ENCODE measurements at regions of chr19 and their contacts with region 1.

Region 1: GRCh38 chr19:14517840-14518505 is at the start of gene DNAJB1:
- DNase-seq: peak; percentile 81
- ATAC-seq: peak; percentile 56
- H3K4me3 Mint-ChIP-seq: peak within 1 kb of the TSS; percentile 94
- H3K27ac Mint-ChIP-seq: peak within 1 kb of the TSS; percentile 94
- H3K4me1 Mint-ChIP-seq: peaks cover 60% of the 10 kb centered on the region
- H3K27me3 Mint-ChIP-seq: no peaks in the 10 kb centered on the region
- total RNA-seq, gene DNAJB1: 69.3 to 72.6 TPM

Region 2: DNA sequence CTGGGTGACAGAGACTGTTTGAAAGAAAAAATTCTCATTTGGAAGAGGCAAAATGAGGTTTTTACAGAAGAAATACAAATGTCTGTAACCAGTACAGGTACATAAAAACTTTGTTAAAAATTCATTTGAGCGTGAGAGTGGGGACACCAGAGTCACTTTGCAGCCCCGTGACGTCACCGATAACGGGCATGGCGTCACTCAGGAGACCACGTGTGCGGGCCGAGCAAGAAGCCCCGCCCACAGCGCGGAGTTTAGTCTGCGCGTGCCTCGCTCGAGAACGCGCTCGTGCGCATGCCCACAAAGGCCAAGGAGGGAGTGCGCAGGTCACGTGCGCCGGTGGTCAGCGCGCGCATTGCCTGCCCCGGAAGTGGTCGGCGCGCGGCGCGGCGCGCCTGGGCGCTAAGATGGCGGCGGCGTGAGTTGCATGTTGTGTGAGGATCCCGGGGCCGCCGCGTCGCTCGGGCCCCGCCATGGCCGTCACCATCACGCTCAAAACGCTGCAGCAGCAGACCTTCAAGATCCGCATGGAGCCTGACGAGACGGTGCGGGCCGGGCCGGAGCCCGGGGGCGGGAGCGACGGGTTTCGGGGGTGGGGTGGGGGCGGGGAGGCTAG is 1572.4 kb before region 1 on chr19 and contains the start of gene RAD23A:
- CTCF ChIA-PET with region 1: no interaction called
- POLR2A ChIA-PET with region 1: no interaction called
- intact Hi-C with region 1: loop called in 1 of 2 experiments (anchors 10 kb)
- DNase-seq: peak; percentile 100
- ATAC-seq: peak; percentile 81
- H3K4me3 Mint-ChIP-seq: peak within 1 kb of the TSS; percentile 88
- H3K27ac Mint-ChIP-seq: peak within 1 kb of the TSS; percentile 97
- H3K4me1 Mint-ChIP-seq: peaks cover 55% of the 10 kb centered on the region
- H3K27me3 Mint-ChIP-seq: no peaks in the 10 kb centered on the region
- total RNA-seq, gene RAD23A: 189 to 265 TPM

Region 3: DNA sequence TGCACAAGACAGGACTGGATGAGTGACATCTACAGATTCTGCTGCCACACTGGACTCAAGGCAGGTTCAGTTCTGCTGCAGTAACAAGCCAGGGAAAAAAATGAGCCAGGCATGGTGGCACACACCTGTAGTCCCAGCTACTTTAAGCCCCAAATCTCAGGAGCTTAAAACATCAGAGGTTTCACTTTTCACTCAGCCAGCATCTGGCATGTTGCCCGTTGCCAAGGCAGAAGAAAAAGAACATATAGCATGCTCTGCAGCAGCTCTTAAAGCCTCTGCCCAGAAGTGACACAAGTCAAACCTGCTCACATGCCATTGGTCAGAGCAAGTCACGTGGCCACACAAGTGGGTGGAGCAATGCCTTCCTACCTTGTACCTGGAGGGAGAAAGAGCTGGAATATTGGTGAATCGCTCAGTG is 151.5 kb before region 1 on chr19:
- CTCF ChIA-PET with region 1: interaction called, 3 read pairs
- POLR2A ChIA-PET with region 1: no interaction called
- intact Hi-C with region 1: loop called in 1 of 2 experiments (anchors 5 kb)
- DNase-seq: peak; percentile 95
- ATAC-seq: peak; percentile 50
- H3K4me3 Mint-ChIP-seq: peak overlapping the region; percentile 45
- H3K27ac Mint-ChIP-seq: peak overlapping the region; percentile 100
- H3K4me1 Mint-ChIP-seq: peaks cover 78% of the 10 kb centered on the region
- H3K27me3 Mint-ChIP-seq: no peaks in the 10 kb centered on the region

Region 4: GRCh38 chr19:14496028-14496833 is 21.7 kb before region 1 on chr19 and contains the start of gene GIPC1:
- CTCF ChIA-PET with region 1: interaction called, 3 read pairs
- POLR2A ChIA-PET with region 1: interaction called, 3 read pairs
- intact Hi-C with region 1: loop called in 1 of 2 experiments (anchors 1 kb)
- DNase-seq: peak; percentile 89
- ATAC-seq: peak; percentile 94
- H3K4me3 Mint-ChIP-seq: peak within 1 kb of the TSS; percentile 80
- H3K27ac Mint-ChIP-seq: peak within 1 kb of the TSS; percentile 74
- H3K4me1 Mint-ChIP-seq: peaks cover 21% of the 10 kb centered on the region
- H3K27me3 Mint-ChIP-seq: no peaks in the 10 kb centered on the region
- total RNA-seq, gene GIPC1: 19.3 to 25.7 TPM

Region 5: DNA sequence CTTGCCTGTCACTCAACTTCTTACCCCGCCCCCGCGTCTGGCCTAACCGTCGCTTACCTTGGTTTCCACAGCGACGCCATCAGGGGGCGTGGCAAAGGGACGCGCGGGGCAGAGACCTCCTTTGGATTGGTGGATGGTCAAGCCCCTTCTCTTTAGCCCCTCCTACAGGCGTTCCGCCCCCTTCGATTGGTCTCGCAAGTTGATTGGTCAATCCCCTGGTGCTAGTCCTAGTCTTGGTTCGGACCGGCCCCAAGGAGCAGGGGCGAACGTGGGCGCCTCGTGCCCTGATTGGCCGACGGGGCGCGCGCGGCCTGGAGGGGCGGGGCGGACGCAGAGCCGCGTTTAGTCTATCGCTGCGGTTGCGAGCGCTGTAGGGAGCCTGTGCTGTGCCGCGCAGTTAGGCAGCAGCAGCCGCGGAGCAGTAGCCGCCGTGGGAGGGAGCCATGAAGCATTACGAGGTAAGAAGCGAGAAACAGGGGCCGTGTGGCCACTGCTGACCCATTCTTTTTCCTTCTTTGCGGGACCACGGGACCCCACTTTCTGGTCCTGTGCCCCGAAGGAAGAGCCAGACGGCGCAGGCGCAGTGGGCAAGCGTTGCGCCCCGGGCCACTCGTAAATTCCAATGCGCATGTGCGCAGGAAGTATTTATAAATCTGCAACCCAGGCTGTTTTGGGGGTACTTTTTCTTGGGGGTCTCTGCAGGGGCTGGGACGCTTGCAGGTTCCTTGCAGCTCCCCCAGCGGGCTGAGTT is 11.5 kb after region 1 on chr19 and contains the start of gene TECR:
- CTCF ChIA-PET with region 1: no interaction called
- POLR2A ChIA-PET with region 1: interaction called, 8 read pairs
- intact Hi-C with region 1: loop called (anchors 1 kb)
- DNase-seq: peak; percentile 100
- ATAC-seq: peak; percentile 98
- H3K4me3 Mint-ChIP-seq: peak within 1 kb of the TSS; percentile 83
- H3K27ac Mint-ChIP-seq: peak within 1 kb of the TSS; percentile 90
- H3K4me1 Mint-ChIP-seq: peaks cover 37% of the 10 kb centered on the region
- H3K27me3 Mint-ChIP-seq: no peaks in the 10 kb centered on the region
- total RNA-seq, gene TECR: 106 to 145 TPM

Region 6: GRCh38 chr19:14689598-14690503 is 171.9 kb after region 1 on chr19 and contains the start of gene ZNF333:
- CTCF ChIA-PET with region 1: interaction called, 3 read pairs
- POLR2A ChIA-PET with region 1: no interaction called
- intact Hi-C with region 1: loop called in 1 of 2 experiments (anchors 1 kb)
- DNase-seq: peak; percentile 100
- ATAC-seq: peak; percentile 94
- H3K4me3 Mint-ChIP-seq: peak within 1 kb of the TSS; percentile 79
- H3K27ac Mint-ChIP-seq: peak within 1 kb of the TSS; percentile 95
- H3K4me1 Mint-ChIP-seq: peaks cover 17% of the 10 kb centered on the region
- H3K27me3 Mint-ChIP-seq: no peaks in the 10 kb centered on the region
- total RNA-seq, gene ZNF333: 11.7 to 12.7 TPM